Caco-2 (cell line): ENCODE measurements at regions of chr19 and their contacts with region 1.

Region 1: DNA sequence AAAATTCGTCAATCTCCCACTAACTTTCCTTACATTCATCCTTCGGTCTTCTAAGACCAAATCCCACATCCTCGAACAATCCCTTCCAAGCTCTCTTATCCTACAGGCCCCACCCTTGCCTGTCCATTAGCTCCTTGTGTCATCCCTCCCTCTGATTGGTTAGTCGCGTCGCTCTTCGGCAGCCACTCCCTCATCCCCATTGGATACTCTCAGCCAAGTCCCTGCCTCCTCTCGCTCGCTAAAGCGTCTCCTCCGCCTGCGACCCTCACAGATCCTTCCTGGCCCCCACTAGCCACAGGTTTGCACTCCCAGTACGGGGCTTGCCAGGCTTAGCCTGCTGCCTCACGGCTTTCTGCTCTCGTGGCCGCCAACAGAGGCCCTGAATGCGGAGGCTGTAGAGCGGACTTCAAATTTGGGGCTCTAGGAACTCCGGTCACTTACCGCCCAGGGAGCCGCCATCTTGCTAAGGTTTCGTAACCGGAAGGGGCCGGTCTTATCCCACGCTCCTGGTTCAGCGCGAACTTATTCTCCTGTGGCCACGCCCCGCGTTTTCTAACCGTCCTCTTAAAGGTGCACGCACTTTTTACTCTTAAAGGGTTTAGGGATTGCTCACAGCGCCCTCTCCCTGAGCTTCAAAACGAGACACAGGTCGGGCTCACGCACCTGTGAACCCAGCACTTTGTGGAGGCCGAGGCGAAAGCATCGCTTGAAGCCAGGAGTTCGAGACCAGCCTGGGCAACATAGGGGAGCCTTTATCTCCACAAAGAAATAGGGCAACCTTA is at the start of gene DMAC2:
- DNase-seq: peak; percentile 95 to 98
- H3K4me3 ChIP-seq: peak within 1 kb of the TSS; percentile 96
- H3K4me3 Mint-ChIP-seq: no peak within 1 kb of the TSS
- H3K27ac Mint-ChIP-seq: no peak within 1 kb of the TSS
- H3K4me1 ChIP-seq: no peaks in the 10 kb centered on the region
- H3K4me1 Mint-ChIP-seq: peaks cover 6% of the 10 kb centered on the region
- H3K27me3 ChIP-seq: no peaks in the 10 kb centered on the region
- H3K27me3 Mint-ChIP-seq: peaks cover 8% of the 10 kb centered on the region
- CTCF ChIP-seq: peak; percentile 20 to 58
- total RNA-seq, gene DMAC2: 75.9 and 85.0 TPM in 2 replicates

Region 2: DNA sequence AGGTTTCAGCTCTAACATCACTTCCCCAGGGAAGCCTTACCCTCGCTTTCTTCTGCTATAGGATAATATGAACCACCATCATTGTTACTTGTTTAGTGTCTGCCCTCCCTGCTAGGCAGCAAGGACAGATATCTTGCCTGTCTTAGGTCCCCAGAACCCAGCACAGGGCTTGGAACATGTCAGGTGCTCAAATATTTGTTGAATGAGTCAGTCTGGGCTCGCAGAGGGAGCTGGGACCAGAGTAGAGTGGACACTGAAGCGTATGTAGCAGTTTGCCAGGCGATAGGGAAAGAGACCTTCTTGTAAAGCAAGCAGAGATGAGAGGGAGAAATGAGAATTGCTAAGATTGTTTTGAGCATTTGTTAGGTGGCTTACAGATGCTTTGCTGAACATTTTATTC is 30.3 kb before region 1 on chr19:
- CTCF ChIA-PET with region 1: interaction called, 7 read pairs
- POLR2A ChIA-PET with region 1: interaction called, 10 read pairs
- intact Hi-C with region 1: no loop called
- DNase-seq: peak; percentile 75 to 80
- H3K4me3 ChIP-seq: no peak overlapping the region
- H3K4me3 Mint-ChIP-seq: peak overlapping the region; percentile 59
- H3K27ac Mint-ChIP-seq: peak overlapping the region; percentile 89
- H3K4me1 ChIP-seq: peaks cover 15% of the 10 kb centered on the region
- H3K4me1 Mint-ChIP-seq: peaks cover 16% of the 10 kb centered on the region
- H3K27me3 ChIP-seq: no peaks in the 10 kb centered on the region
- H3K27me3 Mint-ChIP-seq: no peaks in the 10 kb centered on the region
- CTCF ChIP-seq: no peak